ENCODE measurements at regions of chr5 and their contacts with region 1.

Region 1: DNA sequence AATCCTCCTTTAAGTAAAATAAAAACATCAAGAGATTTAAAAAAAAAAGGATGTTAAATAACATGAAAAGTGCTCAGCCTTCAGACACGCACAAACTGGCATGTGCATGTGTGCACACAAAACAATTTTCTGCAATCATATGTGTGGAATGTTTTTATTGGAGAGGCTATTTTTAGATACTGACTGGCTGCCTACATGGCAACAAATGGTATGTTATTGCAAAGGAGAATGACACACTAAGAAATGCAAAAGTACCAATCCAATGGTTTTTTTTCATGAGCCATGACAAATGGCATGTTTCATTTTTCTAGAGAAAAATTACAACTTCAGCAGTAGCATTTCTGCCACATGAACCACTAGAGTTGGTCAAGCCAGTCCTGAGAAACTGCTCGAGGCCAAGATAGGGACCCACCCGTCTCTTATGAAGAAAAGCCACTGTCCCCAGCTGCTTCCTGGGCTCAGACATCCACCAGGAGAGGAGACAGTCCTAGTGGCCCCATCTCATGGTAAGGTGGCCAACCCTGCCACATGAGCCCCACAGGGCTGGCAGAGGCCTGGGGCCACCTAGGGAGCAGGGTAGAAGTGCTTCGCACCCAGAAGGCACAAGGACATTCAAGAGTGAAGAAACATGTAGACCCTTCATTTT is 116.4 kb downstream of the MYO10 start:
- DNase-seq: no peak
- H3K4me3 ChIP-seq: no peak overlapping the region
- H3K27ac ChIP-seq: no peak overlapping the region
- H3K4me1 ChIP-seq: no peaks in the 10 kb centered on the region
- H3K27me3 ChIP-seq: no peaks in the 10 kb centered on the region
- CTCF ChIP-seq: no peak
- POLR2A ChIP-seq: no peak

Region 2: DNA sequence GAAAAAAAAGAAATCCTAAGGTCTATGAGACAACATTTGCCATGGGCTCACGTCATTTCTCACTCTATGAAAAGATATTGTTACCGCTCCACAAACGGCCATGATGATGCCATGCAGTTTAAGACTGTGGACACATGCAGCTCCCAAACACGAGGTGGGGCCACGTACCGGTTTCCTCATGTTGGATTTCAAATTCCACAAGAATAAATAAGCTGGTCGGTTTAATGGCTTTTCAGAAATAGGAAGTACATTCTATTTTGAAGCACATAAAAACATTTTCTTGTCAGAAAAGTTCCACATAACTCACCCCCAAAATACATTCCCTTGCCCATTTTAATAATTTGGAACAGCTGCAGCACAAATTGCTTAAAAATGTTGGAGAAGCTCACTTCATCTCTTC is 14.2 kb before region 1 on chr5:
- intact Hi-C with region 1: no loop called
- DNase-seq: no peak
- H3K4me3 ChIP-seq: no peak overlapping the region
- H3K27ac ChIP-seq: no peak overlapping the region
- H3K4me1 ChIP-seq: peaks cover 0 to 3% of the 10 kb centered on the region in 2 donors
- H3K27me3 ChIP-seq: no peaks in the 10 kb centered on the region
- CTCF ChIP-seq: no peak
- POLR2A ChIP-seq: no peak

Region 3: DNA sequence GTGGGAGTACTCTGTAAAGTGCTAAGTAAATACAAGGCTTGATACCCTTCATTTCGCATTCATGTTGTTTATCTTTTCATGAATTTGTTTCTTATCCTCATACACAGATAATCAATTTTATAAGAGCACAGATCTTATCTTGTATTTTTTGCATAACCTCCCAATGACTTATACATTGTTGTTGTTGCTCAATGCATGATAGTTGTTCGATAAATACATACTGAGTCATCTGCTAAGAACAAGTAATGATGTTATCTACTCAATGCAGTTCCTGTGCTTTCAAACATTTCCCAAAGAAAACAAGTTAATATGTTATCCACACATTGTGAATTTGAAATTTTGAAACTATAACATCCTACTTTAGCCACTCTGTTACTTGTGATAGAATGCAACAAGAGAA is 875.3 kb after region 1 on chr5:
- intact Hi-C with region 1: no loop called
- DNase-seq: no peak
- H3K4me3 ChIP-seq: no peak overlapping the region
- H3K27ac ChIP-seq: no peak overlapping the region
- H3K4me1 ChIP-seq: no peaks in the 10 kb centered on the region
- H3K27me3 ChIP-seq: no peaks in the 10 kb centered on the region
- CTCF ChIP-seq: no peak
- POLR2A ChIP-seq: no peak

Region 4: GRCh38 chr5:18686253-18686652 is 1866.6 kb after region 1 on chr5:
- intact Hi-C with region 1: loop called (anchors 10 kb)
- DNase-seq: no peak
- H3K4me3 ChIP-seq: no peak overlapping the region
- H3K27ac ChIP-seq: no peak overlapping the region
- H3K4me1 ChIP-seq: no peaks in the 10 kb centered on the region
- H3K27me3 ChIP-seq: no peaks in the 10 kb centered on the region
- CTCF ChIP-seq: no peak
- POLR2A ChIP-seq: no peak

Measured in breast epithelium (tissue), 4 donors.